B cell (primary cell): ENCODE measurements at regions of chr15 and their contacts with region 1.

Region 1: GRCh38 chr15:63212050-63213004 is 22.9 kb downstream of the RAB8B start:
- DNase-seq: no peak
- ATAC-seq: peak; percentile 35
- H3K4me3 ChIP-seq: no peak overlapping the region
- H3K4me3 Mint-ChIP-seq: peak overlapping the region; percentile 65
- H3K27ac ChIP-seq: peak overlapping the region in 1 of 2 donors; percentile 35
- H3K27ac Mint-ChIP-seq: peak overlapping the region; percentile 89
- H3K4me1 ChIP-seq: peaks cover 42 to 45% of the 10 kb centered on the region in 2 donors
- H3K4me1 Mint-ChIP-seq: peaks cover 70% of the 10 kb centered on the region
- H3K27me3 ChIP-seq: no peaks in the 10 kb centered on the region
- H3K27me3 Mint-ChIP-seq: no peaks in the 10 kb centered on the region
- CTCF ChIP-seq: no peak

Region 2: GRCh38 chr15:63135804-63136203 is 76.5 kb before region 1 on chr15:
- CTCF ChIA-PET with region 1: no interaction called
- POLR2A ChIA-PET with region 1: no interaction called
- intact Hi-C with region 1: no loop called
- DNase-seq: no peak
- ATAC-seq: no peak
- H3K4me3 ChIP-seq: no peak overlapping the region
- H3K4me3 Mint-ChIP-seq: no peak overlapping the region
- H3K27ac ChIP-seq: no peak overlapping the region
- H3K27ac Mint-ChIP-seq: no peak overlapping the region
- H3K4me1 ChIP-seq: no peaks in the 10 kb centered on the region
- H3K4me1 Mint-ChIP-seq: peaks cover 6% of the 10 kb centered on the region
- H3K27me3 ChIP-seq: no peaks in the 10 kb centered on the region
- H3K27me3 Mint-ChIP-seq: no peaks in the 10 kb centered on the region
- CTCF ChIP-seq: no peak

Region 3: DNA sequence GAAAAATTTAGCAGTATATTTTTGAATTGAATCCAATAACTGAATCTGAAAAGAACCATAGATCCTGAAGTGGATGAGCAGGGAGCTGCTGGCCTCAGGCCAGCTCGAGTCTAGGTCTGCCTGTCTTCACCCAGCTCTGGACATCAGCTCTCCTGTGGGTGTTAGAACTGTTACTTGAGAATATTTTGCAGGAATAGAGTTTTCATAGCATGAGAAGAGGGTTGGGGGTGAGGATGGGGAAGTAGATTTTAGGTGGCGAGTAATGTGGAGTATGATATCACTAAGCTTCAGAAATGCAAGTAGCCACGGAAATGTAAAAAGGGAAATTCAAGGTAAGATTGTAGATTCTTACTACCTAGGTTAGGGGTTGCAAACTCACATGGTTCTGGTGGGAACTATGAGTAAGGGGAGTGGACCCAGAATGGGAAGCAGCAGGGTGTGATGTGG is 16.7 kb before region 1 on chr15:
- CTCF ChIA-PET with region 1: interaction called, 16 read pairs
- POLR2A ChIA-PET with region 1: interaction called, 4 read pairs
- intact Hi-C with region 1: loop called (anchors 2 kb)
- DNase-seq: peak; percentile 44
- ATAC-seq: no peak
- H3K4me3 ChIP-seq: no peak overlapping the region
- H3K4me3 Mint-ChIP-seq: peak overlapping the region; percentile 61
- H3K27ac ChIP-seq: peak overlapping the region; percentile 22 to 92
- H3K27ac Mint-ChIP-seq: peak overlapping the region; percentile 84
- H3K4me1 ChIP-seq: peaks cover 61 to 65% of the 10 kb centered on the region in 2 donors
- H3K4me1 Mint-ChIP-seq: peaks cover 84% of the 10 kb centered on the region
- H3K27me3 ChIP-seq: no peaks in the 10 kb centered on the region
- H3K27me3 Mint-ChIP-seq: no peaks in the 10 kb centered on the region
- CTCF ChIP-seq: no peak

Region 4: DNA sequence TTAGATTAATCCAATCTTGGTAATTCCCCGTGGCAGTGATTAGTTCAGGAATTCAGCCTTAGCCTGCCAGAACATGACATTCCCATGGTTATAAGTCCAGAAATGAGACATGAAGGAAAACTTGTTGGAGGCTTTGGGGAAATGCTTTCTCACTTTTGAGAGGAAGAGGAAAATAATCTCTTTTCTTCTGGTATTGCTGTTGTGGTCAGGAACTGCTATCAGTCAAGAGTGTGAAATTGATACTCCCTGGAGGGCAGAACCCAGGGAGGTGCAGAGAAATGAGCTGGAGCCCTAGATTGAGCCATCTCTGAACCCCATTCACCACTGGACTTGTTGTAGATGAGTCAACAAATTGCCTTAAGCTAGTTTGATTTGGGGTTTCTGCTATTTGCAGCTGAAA is 26.5 kb after region 1 on chr15:
- CTCF ChIA-PET with region 1: no interaction called
- POLR2A ChIA-PET with region 1: no interaction called
- intact Hi-C with region 1: loop called (anchors 2 kb)
- DNase-seq: no peak
- ATAC-seq: peak; percentile 36
- H3K4me3 ChIP-seq: no peak overlapping the region
- H3K4me3 Mint-ChIP-seq: no peak overlapping the region
- H3K27ac ChIP-seq: no peak overlapping the region
- H3K27ac Mint-ChIP-seq: no peak overlapping the region
- H3K4me1 ChIP-seq: peaks cover 27 to 29% of the 10 kb centered on the region in 2 donors
- H3K4me1 Mint-ChIP-seq: peaks cover 66% of the 10 kb centered on the region
- H3K27me3 ChIP-seq: no peaks in the 10 kb centered on the region
- H3K27me3 Mint-ChIP-seq: no peaks in the 10 kb centered on the region
- CTCF ChIP-seq: no peak

Region 5: GRCh38 chr15:63246691-63247464 is 34.6 kb after region 1 on chr15:
- CTCF ChIA-PET with region 1: no interaction called
- POLR2A ChIA-PET with region 1: no interaction called
- intact Hi-C with region 1: loop called (anchors 5 kb)
- DNase-seq: no peak
- ATAC-seq: no peak
- H3K4me3 ChIP-seq: no peak overlapping the region
- H3K4me3 Mint-ChIP-seq: no peak overlapping the region
- H3K27ac ChIP-seq: peak overlapping the region in 1 of 2 donors; percentile 12
- H3K27ac Mint-ChIP-seq: no peak overlapping the region
- H3K4me1 ChIP-seq: peaks cover 5 to 11% of the 10 kb centered on the region in 2 donors
- H3K4me1 Mint-ChIP-seq: peaks cover 25% of the 10 kb centered on the region
- H3K27me3 ChIP-seq: no peaks in the 10 kb centered on the region
- H3K27me3 Mint-ChIP-seq: no peaks in the 10 kb centered on the region
- CTCF ChIP-seq: no peak